Brain microvascular endothelial cell (primary cell): ENCODE measurements at regions of chr6 and their contacts with region 1.

Region 1: DNA sequence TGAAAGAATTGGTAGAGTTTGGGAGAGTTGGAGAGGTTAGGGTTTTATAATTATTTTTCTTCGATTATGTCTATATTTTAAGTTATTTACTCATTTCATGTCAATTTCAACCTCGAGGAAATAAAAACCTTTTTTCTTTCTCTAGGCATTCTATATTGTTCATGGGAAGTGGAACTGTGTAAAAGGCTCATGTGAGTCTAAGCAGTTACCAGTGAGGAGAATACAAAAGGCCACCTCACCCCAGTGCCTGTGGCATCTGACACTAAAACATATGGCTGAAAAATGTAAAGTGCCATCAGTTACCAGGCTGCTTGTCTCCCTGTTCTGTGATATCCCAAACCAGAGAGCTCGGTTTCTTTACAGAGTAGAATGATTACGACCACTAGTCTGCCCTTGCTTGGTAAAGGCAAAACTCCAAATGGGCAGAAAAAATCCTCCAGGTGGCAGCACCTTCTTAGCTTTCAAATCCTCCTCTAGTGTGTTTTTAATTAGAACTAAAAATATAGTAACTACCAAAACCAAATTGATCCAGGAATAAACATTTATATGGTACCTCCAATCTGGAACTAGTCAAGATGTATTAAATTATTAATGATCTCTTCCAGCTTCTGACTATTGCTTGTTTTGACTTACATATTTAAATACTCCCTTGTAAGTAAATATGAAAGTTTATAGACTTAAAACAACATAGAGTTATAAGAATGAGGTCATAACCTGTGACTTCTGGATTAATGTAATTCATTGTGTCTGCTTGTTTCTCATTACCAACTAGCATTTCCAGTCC is 122.6 kb upstream of the MCHR2 start:
- DNase-seq: peak; percentile 75
- H3K4me3 ChIP-seq: no peak overlapping the region
- H3K27ac ChIP-seq: no peak overlapping the region
- H3K27me3 ChIP-seq: peaks cover 28% of the 10 kb centered on the region
- CTCF ChIP-seq: peak; percentile 80

Region 2: DNA sequence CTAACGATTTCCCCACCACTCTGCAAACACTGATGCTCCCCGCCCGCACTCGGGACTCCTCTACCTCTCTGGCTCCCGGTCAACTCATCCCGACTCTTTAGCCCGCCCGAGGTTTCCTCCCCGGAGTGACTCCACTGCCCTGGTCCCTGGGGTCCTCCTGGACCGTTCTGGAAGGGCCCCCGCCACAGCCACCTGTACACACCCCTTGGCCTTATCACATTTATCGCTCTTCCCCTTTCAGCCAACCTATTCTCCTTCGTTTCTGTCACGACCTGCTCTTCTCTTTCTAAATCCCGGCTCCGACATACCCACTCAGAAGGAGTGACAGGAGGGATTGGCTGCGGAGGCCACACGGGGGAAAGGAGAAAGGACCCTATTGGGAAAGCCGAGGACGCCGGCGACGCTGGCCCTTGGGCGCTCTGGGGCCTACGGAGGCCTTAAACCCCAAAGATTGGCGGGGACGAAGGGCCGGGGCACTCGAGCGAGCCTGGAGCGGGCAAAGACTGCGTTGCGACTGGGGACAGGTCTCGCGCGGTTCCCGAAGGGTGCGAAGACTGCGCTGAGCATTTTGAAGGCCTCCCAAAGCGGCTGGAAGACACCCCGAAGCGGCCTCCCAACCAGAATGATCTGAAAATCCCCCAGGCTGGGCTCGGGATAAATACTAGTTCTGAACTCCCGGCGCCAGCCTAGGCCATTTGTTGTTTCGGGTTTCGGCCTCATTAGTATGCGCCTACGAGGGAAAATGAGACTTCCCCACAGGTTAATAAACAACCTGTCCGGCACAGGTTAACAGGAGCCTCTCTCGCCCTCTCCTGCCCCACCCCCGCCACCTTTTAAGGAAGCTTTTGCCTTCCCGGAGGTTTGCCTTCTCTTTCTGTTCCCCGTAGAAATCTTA is 338.9 kb after region 1 on chr6:
- in situ Hi-C with region 1: loop called (anchors 10 kb)
- DNase-seq: no peak
- H3K4me3 ChIP-seq: no peak overlapping the region
- H3K27ac ChIP-seq: no peak overlapping the region
- H3K27me3 ChIP-seq: peaks cover 96% of the 10 kb centered on the region
- CTCF ChIP-seq: no peak

Region 3: GRCh38 chr6:100549406-100550167 is 433.0 kb after region 1 on chr6:
- in situ Hi-C with region 1: no loop called
- DNase-seq: peak; percentile 73
- H3K4me3 ChIP-seq: no peak overlapping the region
- H3K27ac ChIP-seq: peak overlapping the region; percentile 38
- H3K27me3 ChIP-seq: no peaks in the 10 kb centered on the region
- CTCF ChIP-seq: no peak